Heart right ventricle (tissue), 16 donors: ENCODE measurements at regions of chr3 and their contacts with region 1.

Region 1: DNA sequence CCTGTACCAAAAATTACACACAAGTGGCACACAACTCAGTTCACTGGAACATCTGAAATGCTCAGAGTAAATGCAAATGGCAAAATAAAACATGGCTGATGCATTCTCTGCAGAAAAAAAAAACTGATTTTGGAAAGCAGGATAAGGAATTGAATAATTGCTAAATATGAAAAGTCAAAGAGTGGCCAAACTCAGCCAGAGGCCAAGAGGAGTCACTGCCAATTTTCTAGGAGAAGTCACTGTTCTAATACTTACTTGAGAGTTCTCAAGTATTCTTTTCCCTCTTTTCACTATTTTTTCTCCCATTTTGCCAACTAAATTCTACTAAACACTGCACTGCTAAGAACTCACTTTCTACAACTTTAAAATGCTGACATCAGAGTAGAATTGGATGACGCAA is 1018.6 kb downstream of the TUSC7 start:
- DNase-seq: no peak
- ATAC-seq: no peak
- H3K4me3 ChIP-seq: no peak overlapping the region
- H3K27ac ChIP-seq: no peak overlapping the region
- H3K4me1 ChIP-seq: no peaks in the 10 kb centered on the region
- H3K27me3 ChIP-seq: peaks cover 0 to 4% (median 0%) of the 10 kb centered on the region in 7 donors
- CTCF ChIP-seq: no peak

Region 2: DNA sequence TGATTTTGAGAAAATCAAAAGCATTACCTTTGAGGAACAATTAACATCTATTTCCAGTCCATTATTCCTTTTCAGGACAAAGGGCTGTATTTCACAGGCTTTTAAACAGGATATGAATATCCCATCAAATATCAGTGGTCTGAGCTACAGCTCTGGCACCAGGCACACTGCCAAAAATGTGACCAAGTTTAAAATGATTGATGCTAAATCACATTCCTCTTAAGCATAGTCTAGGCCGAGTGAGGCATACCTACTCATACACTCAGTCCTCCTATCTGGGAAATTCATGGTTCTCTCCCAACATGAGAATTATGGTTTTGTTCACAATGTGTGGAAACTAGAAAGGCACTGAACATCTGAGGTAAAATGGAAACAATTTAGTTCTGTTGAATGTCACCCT is 335.1 kb before region 1 on chr3:
- intact Hi-C with region 1: loop called in 1 of 10 experiments (anchors 5 kb)
- DNase-seq: no peak
- ATAC-seq: no peak
- H3K4me3 ChIP-seq: no peak overlapping the region
- H3K27ac ChIP-seq: no peak overlapping the region
- H3K4me1 ChIP-seq: no peaks in the 10 kb centered on the region
- H3K27me3 ChIP-seq: peaks cover 0 to 26% (median 10%) of the 10 kb centered on the region in 7 donors
- CTCF ChIP-seq: no peak